ENCODE measurements at regions of chr16 and their contacts with region 1.

Region 1: GRCh38 chr16:79071424-79071823 is 529.1 kb downstream of the MAF start:
- DNase-seq: no peak
- H3K4me3 ChIP-seq: no peak overlapping the region
- H3K27ac ChIP-seq: peak overlapping the region; percentile 72 to 82 (median 79)
- H3K4me1 ChIP-seq: peaks cover 0 to 70% (median 51%) of the 10 kb centered on the region in 4 donors
- H3K27me3 ChIP-seq: no peaks in the 10 kb centered on the region
- CTCF ChIP-seq: no peak
- EP300 ChIP-seq: no peak
- POLR2A ChIP-seq: no peak

Region 2: DNA sequence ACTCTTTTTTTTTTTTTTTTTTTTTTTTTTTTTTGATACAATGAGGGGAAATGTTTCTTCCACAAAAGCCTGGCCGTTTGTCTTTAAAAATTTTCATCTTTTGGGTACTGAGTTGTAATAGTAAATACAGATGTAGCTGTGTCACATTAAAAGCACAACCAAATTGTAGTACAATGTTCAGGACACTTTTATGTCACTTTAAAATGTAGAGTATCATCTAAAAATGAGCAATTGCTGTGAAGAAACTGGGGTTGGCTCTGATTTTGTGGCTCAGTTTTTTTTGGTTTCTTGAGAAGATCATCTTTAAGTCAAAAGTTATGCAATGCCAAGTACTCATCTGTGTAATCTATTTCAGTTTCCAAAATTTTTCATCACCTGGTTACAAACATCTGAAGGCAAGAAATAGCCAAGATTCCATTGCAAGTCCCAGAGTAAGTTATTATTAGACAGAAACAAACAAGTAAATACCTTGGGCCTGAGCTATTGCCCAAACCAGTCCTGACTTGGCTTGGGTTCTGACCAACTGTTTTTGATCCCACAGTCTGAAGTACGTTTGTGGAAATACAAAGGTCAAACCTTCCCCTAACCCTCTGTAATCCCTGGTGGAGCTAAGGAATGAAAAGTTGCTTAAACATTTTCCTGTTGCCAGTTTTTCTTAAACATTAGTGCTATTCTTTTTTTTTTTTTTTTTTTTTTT is 254.8 kb before region 1 on chr16:
- intact Hi-C with region 1: loop called (anchors 10 kb)
- DNase-seq: no peak
- H3K4me3 ChIP-seq: no peak overlapping the region
- H3K27ac ChIP-seq: peak overlapping the region; percentile 43 to 72 (median 68)
- H3K4me1 ChIP-seq: peaks cover 28 to 36% (median 32%) of the 10 kb centered on the region in 4 donors
- H3K27me3 ChIP-seq: no peaks in the 10 kb centered on the region
- CTCF ChIP-seq: no peak
- EP300 ChIP-seq: no peak
- POLR2A ChIP-seq: no peak

Region 3: GRCh38 chr16:79008036-79008868 is 63.2 kb before region 1 on chr16:
- intact Hi-C with region 1: no loop called
- DNase-seq: no peak
- H3K4me3 ChIP-seq: no peak overlapping the region
- H3K27ac ChIP-seq: no peak overlapping the region
- H3K4me1 ChIP-seq: no peaks in the 10 kb centered on the region
- H3K27me3 ChIP-seq: no peaks in the 10 kb centered on the region
- CTCF ChIP-seq: no peak
- EP300 ChIP-seq: no peak
- POLR2A ChIP-seq: no peak

Measured in esophagus muscularis mucosa (tissue), 4 donors.